Colonic mucosa (tissue), 4 donors: ENCODE measurements at regions of chr20 and their contacts with region 1.

Region 1: DNA sequence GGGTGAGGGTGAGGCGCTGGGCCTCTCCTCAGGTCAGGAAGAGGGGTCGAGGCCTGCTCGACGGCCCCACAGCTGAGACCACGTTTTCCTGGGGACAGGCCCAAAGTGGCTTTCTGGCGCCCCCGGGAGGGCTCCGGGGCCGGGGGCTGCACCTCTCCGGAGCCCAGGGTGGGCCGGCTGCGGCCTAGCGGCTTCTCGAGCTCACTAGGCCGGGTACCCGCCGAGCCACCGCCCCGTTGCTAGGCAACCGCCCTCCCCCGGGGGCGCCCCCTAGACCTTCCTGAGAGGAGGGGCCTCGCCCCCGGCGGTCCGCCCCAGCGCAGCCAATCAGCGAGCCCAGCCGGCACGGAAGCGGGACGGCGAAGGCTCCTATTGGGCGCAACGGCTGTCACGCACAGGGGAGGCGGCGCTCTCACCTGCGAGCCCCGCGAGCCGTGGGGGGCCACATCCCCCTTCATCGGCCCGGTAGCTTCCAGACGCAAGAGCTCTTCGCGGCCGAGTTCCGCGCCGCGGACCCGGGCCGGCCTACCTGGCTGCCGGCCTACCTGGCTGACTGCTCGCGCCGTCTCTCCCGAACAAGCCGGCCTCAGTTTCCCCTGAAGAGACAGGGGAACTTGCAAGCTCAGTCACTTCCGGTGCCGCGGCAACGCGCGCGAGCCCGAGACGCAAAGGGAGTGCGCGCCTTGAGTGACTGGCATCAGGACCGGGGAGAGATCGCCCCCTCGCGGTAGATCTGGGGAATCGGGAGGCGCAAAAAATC is 831 bp upstream of the BCL2L1 start:
- DNase-seq: peak; percentile 97
- H3K4me3 ChIP-seq: peak overlapping the region; percentile 64
- H3K27ac ChIP-seq: peak overlapping the region; percentile 99
- H3K4me1 ChIP-seq: peaks cover 16% of the 10 kb centered on the region
- H3K27me3 ChIP-seq: no peaks in the 10 kb centered on the region
- CTCF ChIP-seq: peak; percentile 84

Region 2: DNA sequence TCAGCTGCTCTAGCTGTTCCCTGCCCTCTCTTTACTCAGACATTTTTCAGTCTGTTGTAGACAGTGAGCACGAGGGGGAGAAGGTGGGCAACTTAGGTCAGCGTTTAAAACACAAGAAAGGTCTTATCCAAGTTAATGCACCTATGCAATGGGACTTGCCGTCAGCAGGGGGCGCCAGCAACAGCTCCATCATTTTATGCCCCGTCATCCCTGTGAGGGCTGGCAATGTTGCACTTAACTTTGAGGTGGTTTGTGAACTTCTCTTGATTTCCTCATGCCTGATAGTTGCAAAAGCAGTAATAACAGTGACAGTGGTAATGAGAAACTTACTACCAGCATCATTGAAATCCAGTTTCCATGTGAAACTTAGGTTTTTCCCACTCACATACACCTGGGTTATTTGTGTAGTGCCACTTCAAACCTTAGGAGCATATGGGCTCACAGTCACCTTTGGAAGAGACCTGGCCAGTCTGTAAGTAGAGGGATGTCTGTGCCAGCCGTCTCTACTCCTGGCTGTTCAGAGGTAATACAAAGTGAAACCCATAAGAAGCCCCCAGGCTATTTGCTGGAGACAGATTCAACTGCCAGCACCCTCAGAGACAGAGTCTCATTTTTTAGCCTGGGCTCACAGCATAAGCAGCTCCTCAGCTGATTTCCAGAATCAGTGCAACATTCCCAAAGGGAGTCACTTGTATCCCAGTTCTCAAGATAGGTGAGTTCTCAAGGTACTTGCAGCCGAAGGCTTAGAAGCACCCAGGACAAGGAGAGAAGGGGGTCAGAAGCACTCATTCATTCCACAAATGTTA is 163.2 kb before region 1 on chr20:
- intact Hi-C with region 1: loop called (anchors 10 kb)
- DNase-seq: peak; percentile 74
- H3K4me3 ChIP-seq: no peak overlapping the region
- H3K27ac ChIP-seq: peak overlapping the region; percentile 49
- H3K4me1 ChIP-seq: no peaks in the 10 kb centered on the region
- H3K27me3 ChIP-seq: no peaks in the 10 kb centered on the region
- CTCF ChIP-seq: peak; percentile 86

Region 3: GRCh38 chr20:31630187-31630790 is 93.2 kb before region 1 on chr20:
- intact Hi-C with region 1: loop called (anchors 10 kb)
- DNase-seq: no peak
- H3K4me3 ChIP-seq: no peak overlapping the region
- H3K27ac ChIP-seq: no peak overlapping the region
- H3K4me1 ChIP-seq: no peaks in the 10 kb centered on the region
- H3K27me3 ChIP-seq: no peaks in the 10 kb centered on the region
- CTCF ChIP-seq: no peak

Region 4: GRCh38 chr20:31661625-31662371 is 61.7 kb before region 1 on chr20:
- intact Hi-C with region 1: loop called (anchors 2 kb)
- DNase-seq: peak; percentile 87
- H3K4me3 ChIP-seq: peak overlapping the region; percentile 19
- H3K27ac ChIP-seq: peak overlapping the region; percentile 56
- H3K4me1 ChIP-seq: peaks cover 18% of the 10 kb centered on the region
- H3K27me3 ChIP-seq: no peaks in the 10 kb centered on the region
- CTCF ChIP-seq: peak; percentile 79

Region 5: GRCh38 chr20:31845300-31845863 is 121.9 kb after region 1 on chr20 and contains the start of gene FOXS1:
- intact Hi-C with region 1: no loop called
- DNase-seq: no peak
- H3K4me3 ChIP-seq: no peak within 1 kb of the TSS
- H3K27ac ChIP-seq: no peak within 1 kb of the TSS
- H3K4me1 ChIP-seq: no peaks in the 10 kb centered on the region
- H3K27me3 ChIP-seq: no peaks in the 10 kb centered on the region
- CTCF ChIP-seq: no peak
- total RNA-seq, gene FOXS1: 0.20 to 0.48 TPM